MCF 10A (cell line): ENCODE measurements at regions of chr2 and their contacts with region 1.

Region 1: DNA sequence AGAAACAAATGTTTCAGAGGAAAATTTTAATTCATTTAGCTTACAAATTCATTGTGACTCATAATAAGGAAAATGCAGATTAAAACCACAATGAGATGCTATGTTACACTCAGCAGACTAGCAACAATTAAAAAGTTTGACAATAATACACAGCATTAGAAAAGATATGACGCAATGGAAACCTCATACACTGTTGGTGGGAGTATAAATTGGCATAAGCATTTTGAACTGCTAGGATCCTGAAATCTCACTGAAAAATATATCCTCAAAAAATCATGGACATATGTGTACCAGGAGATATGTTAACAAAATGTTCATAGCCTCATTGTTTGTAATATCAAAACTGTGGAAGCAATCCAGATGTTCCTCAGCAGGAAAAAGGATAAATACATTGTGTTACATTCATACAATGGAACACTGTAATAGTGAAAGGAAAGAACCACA is 13.7 kb downstream of the CALCRL start:
- DNase-seq: no peak
- H3K4me3 Mint-ChIP-seq: no peak overlapping the region
- H3K27ac Mint-ChIP-seq: no peak overlapping the region
- H3K4me1 Mint-ChIP-seq: peaks cover 22% of the 10 kb centered on the region
- H3K27me3 Mint-ChIP-seq: no peaks in the 10 kb centered on the region
- CTCF ChIP-seq: no peak

Region 2: GRCh38 chr2:187390891-187391290 is 43.5 kb before region 1 on chr2:
- CTCF ChIA-PET with region 1: interaction called, 3 read pairs
- POLR2A ChIA-PET with region 1: no interaction called
- intact Hi-C with region 1: loop called (anchors 2 kb)
- DNase-seq: peak; percentile 70
- H3K4me3 Mint-ChIP-seq: no peak overlapping the region
- H3K27ac Mint-ChIP-seq: no peak overlapping the region
- H3K4me1 Mint-ChIP-seq: peaks cover 6% of the 10 kb centered on the region
- H3K27me3 Mint-ChIP-seq: no peaks in the 10 kb centered on the region
- CTCF ChIP-seq: no peak

Region 3: GRCh38 chr2:187803816-187804215 is 369.5 kb after region 1 on chr2:
- CTCF ChIA-PET with region 1: no interaction called
- POLR2A ChIA-PET with region 1: no interaction called
- intact Hi-C with region 1: no loop called
- DNase-seq: no peak
- H3K4me3 Mint-ChIP-seq: no peak overlapping the region
- H3K27ac Mint-ChIP-seq: no peak overlapping the region
- H3K4me1 Mint-ChIP-seq: no peaks in the 10 kb centered on the region
- H3K27me3 Mint-ChIP-seq: no peaks in the 10 kb centered on the region
- CTCF ChIP-seq: no peak